Right ventricle myocardium inferior (tissue), 1 donor: ENCODE measurements at regions of chr17 and their contacts with region 1.

Region 1: DNA sequence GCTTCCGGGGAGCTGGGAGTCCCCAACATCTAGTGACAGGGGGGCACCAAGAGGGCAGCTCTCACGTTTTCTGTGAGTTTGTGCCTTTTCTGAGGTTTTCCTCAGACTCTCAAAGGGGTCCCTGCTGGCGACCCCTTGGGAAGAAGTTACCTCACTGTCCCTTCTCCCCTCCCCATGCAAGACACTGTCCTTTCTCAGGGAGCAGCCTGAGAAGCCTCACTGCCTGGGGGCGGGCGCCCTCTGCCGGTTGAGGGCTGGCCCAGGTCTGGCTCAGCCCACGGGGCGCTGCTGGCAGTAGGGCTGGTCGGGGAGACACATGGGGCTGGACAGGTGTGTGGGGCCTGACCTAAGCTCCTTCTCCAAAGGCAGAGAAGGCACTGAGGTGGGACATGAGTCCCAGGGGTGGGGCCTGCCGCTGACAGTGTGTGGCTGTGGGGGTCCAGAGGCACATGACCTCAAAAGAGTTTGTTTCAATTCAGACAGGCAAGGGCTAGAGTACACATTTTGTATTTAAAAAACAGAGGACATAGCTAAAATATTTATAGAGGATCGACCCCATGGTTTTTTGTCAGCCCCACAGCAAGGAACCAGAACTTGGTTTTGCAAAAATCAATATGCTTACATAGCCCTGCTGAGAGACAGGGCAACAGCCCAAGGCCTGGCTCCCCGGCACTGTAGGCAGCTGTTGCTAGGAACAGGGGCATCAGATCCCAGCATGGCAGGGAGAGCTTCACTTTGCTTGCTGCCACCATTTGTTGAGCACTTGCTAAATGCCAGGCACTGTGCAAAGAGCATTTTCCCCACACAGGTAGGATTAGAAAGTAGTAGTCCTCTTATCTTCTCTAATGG is 18.5 kb upstream of the ALDH3A1 start:
- DNase-seq: peak; percentile 85
- ATAC-seq: peak; percentile 88

Region 2: DNA sequence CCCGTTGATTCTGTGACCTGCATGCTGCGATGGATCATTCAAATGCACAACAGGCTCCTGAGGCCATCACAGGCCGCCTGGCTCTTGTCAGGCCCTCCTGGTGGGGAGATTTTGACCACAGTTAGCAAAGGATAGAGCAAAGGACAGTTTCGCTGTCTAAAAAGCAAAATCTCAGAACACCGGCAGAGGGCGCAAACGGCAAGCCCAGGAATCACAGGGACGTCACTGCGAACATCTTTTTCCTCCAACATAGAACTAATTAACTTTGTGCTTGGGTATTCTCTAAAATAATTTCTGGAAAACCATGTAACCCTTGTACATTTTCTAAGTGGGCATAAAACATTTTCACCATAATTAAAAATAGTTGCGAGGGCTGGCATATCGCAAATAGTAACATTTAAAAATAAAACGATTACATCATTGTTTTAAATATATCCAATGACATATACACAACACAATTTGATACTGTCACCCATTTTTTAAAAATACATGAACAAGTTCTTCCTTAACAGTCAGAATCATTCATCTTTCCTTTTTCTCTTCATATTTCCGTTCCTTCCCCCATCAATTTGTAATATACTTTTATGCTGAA is 252.7 kb before region 1 on chr17:
- intact Hi-C with region 1: loop called (anchors 1 kb)
- DNase-seq: peak; percentile 74
- ATAC-seq: peak; percentile 68